Panc1 (cell line): ENCODE measurements at regions of chr7 and their contacts with region 1.

Region 1: DNA sequence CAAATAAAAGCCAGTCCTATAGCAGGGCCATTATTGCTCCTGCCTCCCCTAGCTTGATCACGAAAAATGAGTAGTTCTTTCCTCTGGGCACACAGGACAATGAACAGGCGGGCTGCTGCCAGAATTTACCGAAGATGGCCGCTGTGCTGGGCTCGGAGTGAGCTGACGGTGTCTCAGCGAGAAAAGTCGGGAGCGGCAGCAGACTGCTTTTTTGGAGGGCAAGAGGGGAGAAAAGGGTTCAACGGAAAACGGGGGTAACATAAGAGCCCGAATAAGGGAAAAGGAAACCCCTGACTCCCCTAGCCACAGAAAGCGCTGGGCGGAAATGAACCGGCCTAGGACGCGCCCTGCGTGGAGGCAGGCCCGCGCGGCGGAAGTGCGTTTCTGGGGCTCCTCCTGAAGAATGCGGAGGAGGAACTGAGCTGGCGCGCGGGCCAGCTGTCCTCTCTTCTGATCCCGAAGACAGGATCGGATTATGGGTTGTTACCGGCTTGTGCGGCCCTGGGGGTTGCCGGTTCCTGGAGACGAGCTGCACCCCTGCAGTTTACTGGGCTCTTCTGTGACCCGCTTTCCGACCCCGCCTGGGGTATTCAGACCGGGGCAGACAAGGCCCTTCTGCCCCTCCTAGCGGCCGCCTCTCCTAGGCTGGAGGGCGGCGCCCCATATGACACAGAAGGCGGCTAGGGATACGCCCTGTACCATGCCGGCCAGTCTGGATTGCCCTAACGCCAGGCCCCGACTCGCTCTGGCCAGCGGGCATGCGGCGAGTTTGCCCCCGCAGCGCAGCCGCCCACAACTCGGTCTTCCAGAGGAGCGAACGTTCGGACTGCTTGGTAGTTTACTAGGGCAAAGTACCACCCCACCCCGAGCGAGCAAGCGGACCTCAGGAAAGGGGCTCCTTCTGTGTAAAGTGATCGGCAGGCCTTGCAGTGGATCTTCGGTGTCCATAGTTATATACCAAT is 30.1 kb upstream of the KMT2E start:
- DNase-seq: peak; percentile 85
- ATAC-seq: peak; percentile 97
- H3K4me3 ChIP-seq: peak overlapping the region; percentile 71 to 80
- H3K27ac ChIP-seq: peak overlapping the region; percentile 99
- H3K4me1 ChIP-seq: peaks cover 87% of the 10 kb centered on the region
- H3K27me3 ChIP-seq: no peaks in the 10 kb centered on the region
- CTCF ChIP-seq: peak; percentile 60

Region 2: GRCh38 chr7:105055621-105056020 is 71.8 kb after region 1 on chr7:
- CTCF ChIA-PET with region 1: no interaction called
- POLR2A ChIA-PET with region 1: no interaction called
- in situ Hi-C with region 1: no loop called
- intact Hi-C with region 1: loop called (anchors 10 kb)
- DNase-seq: no peak
- ATAC-seq: no peak
- H3K4me3 ChIP-seq: no peak overlapping the region
- H3K27ac ChIP-seq: no peak overlapping the region
- H3K4me1 ChIP-seq: no peaks in the 10 kb centered on the region
- H3K27me3 ChIP-seq: no peaks in the 10 kb centered on the region
- CTCF ChIP-seq: no peak